SK-N-SH (cell line): ENCODE measurements at regions of chr6 and their contacts with region 1.

Region 1: DNA sequence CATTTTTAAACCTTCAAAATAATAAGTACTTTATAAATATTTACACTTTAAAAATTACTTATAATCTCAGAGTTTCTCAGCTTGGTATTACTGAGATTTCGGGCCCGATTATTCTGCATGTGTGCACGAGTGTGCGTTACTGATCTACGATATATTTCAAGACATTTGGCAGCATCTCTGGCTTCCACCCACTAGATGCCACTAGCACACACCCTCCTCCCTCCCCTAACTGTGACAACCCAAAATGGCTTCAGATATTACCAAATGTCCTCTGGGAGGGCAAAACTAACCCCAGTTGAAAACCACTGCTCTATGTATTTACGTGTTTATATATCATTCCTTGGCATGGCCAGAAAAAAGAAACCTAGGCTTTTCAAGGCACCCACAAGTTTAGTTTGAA is 95.9 kb downstream of the FYN start:
- DNase-seq: no peak
- H3K4me3 ChIP-seq: no peak overlapping the region
- H3K27ac ChIP-seq: no peak overlapping the region
- H3K4me1 ChIP-seq: peaks cover 14 to 31% of the 10 kb centered on the region in 2 experiments; a peak in 3 of 4 replicates
- H3K27me3 ChIP-seq: no peaks in the 10 kb centered on the region
- CTCF ChIP-seq: no peak; the same call in 1 of the 2 replicates
- EP300 ChIP-seq: no peak
- RAD21 ChIP-seq: peak; percentile 42

Region 2: DNA sequence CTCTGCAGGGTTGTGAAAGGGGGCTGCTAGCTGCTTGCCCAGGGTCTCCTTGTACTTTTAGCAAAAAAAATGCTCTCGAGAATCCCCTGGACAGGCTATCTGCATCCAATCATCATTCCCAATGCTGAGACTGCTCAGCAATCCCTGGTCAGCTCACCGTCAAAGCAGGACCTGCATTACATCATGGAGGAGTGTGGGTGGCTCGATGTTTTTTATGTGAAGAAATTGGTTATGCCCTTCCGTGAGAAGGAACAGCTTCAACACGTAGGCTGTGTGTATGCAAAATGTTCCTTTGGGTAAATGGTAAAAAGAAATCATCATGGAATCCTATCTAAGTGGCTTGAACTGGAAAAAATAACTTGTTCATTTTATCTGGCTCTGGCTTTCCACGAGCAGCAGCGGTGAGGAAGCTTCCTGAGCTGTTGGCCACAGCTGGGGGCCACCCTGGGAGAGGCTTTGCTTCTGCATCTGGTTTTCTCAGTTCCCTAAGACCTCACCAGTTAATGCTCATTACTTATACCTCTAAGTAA is 15.5 kb before region 1 on chr6:
- CTCF ChIA-PET with region 1: interaction called, 10 read pairs
- POLR2A ChIA-PET with region 1: no interaction called
- DNase-seq: no peak
- H3K4me3 ChIP-seq: no peak overlapping the region
- H3K27ac ChIP-seq: no peak overlapping the region
- H3K4me1 ChIP-seq: peaks cover 39 to 55% of the 10 kb centered on the region in 2 experiments; a peak in 3 of 4 replicates
- H3K27me3 ChIP-seq: no peaks in the 10 kb centered on the region
- CTCF ChIP-seq: no peak
- EP300 ChIP-seq: no peak
- RAD21 ChIP-seq: no peak